OCI-LY7 (cell line): ENCODE measurements at regions of chr19 and their contacts with region 1.

Region 1: DNA sequence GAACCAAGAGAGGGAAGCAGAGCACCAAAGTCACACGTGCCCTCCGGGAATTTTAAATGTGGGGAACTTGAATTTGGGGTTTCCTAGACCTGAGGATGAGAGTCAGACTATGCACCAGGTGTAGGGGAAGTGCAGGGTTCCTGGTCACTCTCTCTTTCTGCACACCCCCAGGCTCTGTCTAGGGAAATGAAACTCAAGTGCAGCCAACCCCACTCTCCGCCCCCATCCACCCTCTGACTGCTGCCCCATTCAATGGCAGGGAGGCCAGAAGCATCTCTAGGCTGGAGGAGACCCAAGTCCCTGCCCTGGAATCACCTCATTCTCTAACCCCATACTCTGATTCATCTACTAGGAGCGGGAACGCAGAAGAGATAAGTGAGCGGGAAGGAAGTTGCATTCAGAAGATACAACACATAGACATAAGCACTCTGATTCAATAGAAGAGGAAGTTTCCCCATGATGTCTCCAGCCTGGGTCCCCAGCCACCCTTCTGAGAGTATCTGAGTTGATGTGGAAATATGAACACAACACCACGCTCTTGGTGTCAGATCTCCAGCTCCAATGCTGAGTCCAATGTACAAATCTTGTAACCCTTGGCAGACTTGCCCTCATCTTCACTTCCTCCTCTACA is 4.7 kb upstream of the SIGLEC14 start:
- DNase-seq: peak; percentile 48
- H3K4me3 ChIP-seq: no peak overlapping the region
- H3K27ac ChIP-seq: no peak overlapping the region
- H3K4me1 ChIP-seq: peaks cover 23% of the 10 kb centered on the region
- CTCF ChIP-seq: no peak

Region 2: DNA sequence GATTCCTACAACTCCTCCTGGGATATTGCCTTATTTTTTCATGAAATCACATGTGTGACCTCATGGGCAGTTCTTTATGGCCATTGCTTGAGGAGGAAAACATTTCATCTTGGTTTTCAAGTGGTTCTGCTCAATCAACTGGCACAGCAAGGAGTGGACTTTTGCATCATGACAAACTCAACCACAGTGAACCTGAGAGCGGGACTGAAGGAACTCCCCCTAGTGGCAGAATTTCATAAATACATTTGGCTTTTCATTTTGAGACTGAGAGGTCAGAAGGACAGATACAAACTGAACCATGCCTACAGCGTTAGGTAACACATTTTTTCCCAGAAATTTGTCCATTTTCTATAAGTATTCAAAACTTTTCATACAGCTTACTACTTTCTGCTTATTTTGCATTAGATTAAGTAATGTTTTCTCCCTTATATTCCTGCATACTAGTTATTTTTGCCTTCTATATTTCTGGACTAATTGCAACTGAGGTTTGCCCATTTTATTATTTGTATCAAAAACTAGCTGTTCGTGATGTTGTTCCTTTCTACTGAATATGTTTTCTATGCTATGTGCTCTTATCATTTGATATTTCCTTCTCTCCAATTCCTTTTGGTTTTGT is 136.4 kb before region 1 on chr19:
- CTCF ChIA-PET with region 1: no interaction called
- POLR2A ChIA-PET with region 1: no interaction called
- intact Hi-C with region 1: loop called (anchors 5 kb)
- DNase-seq: peak; percentile 66
- H3K4me3 ChIP-seq: no peak overlapping the region
- H3K27ac ChIP-seq: no peak overlapping the region
- H3K4me1 ChIP-seq: no peaks in the 10 kb centered on the region
- CTCF ChIP-seq: peak; percentile 93

Region 3: DNA sequence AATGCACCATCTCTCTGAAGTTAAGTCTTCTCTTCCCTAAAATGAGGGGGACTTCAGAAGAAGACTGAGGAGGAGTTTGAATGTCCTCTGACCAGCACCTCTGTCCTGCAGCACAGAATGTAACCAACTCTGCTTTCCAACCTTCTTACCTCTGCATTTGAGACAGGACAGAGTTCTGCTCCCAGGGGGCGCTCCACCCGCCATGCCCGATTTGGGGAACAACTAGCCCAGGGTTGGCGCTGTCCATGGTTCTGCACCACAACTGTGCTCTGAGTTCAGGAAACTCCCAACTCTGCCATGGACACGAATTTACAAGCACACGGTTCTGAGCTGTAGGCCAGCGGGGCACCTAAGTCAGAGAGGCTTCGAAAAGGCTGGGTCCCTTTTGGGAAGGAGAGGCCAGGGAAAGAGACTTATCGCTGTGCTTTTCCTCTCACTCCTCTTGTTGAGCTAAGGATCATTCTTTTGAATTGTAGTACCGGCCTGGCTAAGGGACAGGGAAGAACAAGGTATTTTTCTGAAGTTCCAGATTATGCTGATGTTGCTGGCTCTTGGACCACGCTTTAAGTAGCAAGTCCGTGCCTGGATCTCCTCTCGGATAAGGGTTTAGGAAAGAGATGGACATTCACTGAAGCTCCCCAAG is 43.3 kb before region 1 on chr19:
- CTCF ChIA-PET with region 1: no interaction called
- POLR2A ChIA-PET with region 1: no interaction called
- intact Hi-C with region 1: loop called (anchors 1 kb)
- DNase-seq: peak; percentile 81
- H3K4me3 ChIP-seq: peak overlapping the region; percentile 47
- H3K27ac ChIP-seq: peak overlapping the region; percentile 94
- H3K4me1 ChIP-seq: peaks cover 36% of the 10 kb centered on the region
- CTCF ChIP-seq: peak; percentile 92